Endothelial cell of umbilical vein (primary cell): ENCODE measurements at regions of chr6 and their contacts with region 1.

Region 1: DNA sequence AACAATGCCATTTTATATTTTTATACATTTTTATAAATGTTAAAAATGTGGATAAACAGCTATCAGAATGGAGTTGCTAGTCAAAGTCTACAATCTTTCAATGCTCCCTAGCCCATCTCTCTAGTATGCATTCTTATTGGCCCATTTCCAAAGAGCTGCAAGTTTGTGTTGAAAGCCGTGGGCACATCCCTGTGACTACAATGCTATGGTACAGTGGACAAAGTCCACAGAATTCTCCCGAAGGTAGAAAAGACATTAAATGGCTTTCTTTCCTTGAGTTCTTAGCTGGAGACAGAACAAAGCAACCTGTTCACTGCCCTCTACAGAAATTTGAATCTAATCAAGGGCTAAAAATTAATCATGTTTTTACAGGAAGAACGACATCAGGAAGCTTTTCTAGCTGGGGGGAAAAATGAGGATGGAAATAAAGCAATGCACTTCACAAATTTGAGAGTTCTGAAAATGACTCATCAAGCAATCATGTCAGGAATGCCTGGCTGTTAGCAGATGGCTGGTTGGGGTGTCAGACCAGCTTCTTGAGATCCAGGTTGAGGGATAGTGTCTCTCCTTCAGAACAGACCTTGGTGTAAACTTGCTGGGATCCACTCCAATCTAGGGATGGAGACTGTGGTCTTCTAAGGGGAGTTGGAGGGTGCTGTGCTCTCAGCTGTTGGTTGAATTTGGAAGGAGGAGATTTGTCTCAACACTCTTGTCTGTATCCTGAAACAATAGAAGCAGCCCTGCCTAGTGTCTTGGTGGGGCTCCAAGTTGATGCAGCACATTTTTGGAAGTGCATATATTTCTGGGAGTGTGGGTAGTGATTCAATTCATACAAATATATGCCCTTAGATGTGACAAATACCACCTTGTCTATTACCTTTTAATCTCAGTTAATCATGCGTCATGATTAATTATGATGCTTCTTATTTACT is 143.4 kb upstream of the PHACTR1 start:
- DNase-seq: peak; percentile 92
- H3K4me3 ChIP-seq: peak overlapping the region in 1 of 3 experiments; percentile 13
- H3K27ac ChIP-seq: peak overlapping the region; percentile 92
- H3K4me1 ChIP-seq: peaks cover 75% of the 10 kb centered on the region
- H3K27me3 ChIP-seq: no peaks in the 10 kb centered on the region
- CTCF ChIP-seq: no peak
- POLR2A ChIP-seq: no peak

Region 2: DNA sequence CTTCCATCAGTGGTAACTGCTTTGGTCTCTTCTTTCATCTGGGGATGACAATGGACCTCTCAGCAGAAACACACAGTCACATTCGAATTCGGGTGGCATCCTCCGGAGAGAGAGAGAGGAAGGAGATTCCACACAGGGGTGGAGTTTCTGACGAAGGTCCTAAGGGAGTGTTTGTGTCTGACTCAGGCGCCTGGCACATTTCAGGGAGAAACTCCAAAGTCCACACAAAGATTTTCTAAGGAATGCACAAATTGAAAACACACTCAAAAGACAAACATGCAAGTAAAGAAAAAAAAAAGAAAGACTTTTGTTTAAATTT is 276.9 kb before region 1 on chr6:
- CTCF ChIA-PET with region 1: interaction called, 5 read pairs
- POLR2A ChIA-PET with region 1: interaction called, 16 read pairs
- dilution Hi-C with region 1: no loop called
- intact Hi-C with region 1: loop called (anchors 1 kb)
- DNase-seq: peak; percentile 53
- H3K4me3 ChIP-seq: peak overlapping the region in 2 of 3 experiments; percentile 91 to 96
- H3K27ac ChIP-seq: peak overlapping the region; percentile 98
- H3K4me1 ChIP-seq: peaks cover 30% of the 10 kb centered on the region
- H3K27me3 ChIP-seq: no peaks in the 10 kb centered on the region
- CTCF ChIP-seq: no peak
- POLR2A ChIP-seq: no peak

Region 3: GRCh38 chr6:12490904-12491571 is 82.1 kb before region 1 on chr6:
- CTCF ChIA-PET with region 1: no interaction called
- POLR2A ChIA-PET with region 1: no interaction called
- dilution Hi-C with region 1: loop called (anchors 25 kb)
- intact Hi-C with region 1: loop called (anchors 1 kb)
- DNase-seq: peak; percentile 96
- H3K4me3 ChIP-seq: no peak overlapping the region
- H3K27ac ChIP-seq: peak overlapping the region; percentile 93
- H3K4me1 ChIP-seq: peaks cover 39% of the 10 kb centered on the region
- H3K27me3 ChIP-seq: no peaks in the 10 kb centered on the region
- CTCF ChIP-seq: no peak
- POLR2A ChIP-seq: no peak

Region 4: GRCh38 chr6:12545619-12546409 is 27.3 kb before region 1 on chr6:
- CTCF ChIA-PET with region 1: interaction called, 6 read pairs
- POLR2A ChIA-PET with region 1: no interaction called
- dilution Hi-C with region 1: no loop called
- intact Hi-C with region 1: loop called (anchors 2 kb)
- DNase-seq: peak; percentile 87
- H3K4me3 ChIP-seq: no peak overlapping the region
- H3K27ac ChIP-seq: peak overlapping the region; percentile 89
- H3K4me1 ChIP-seq: peaks cover 33% of the 10 kb centered on the region
- H3K27me3 ChIP-seq: no peaks in the 10 kb centered on the region
- CTCF ChIP-seq: no peak
- POLR2A ChIP-seq: no peak

Region 5: GRCh38 chr6:12557765-12558164 is 15.4 kb before region 1 on chr6:
- CTCF ChIA-PET with region 1: interaction called, 15 read pairs
- POLR2A ChIA-PET with region 1: no interaction called
- dilution Hi-C with region 1: no loop called
- intact Hi-C with region 1: no loop called
- DNase-seq: no peak
- H3K4me3 ChIP-seq: no peak overlapping the region
- H3K27ac ChIP-seq: no peak overlapping the region
- H3K4me1 ChIP-seq: no peaks in the 10 kb centered on the region
- H3K27me3 ChIP-seq: no peaks in the 10 kb centered on the region
- CTCF ChIP-seq: no peak
- POLR2A ChIP-seq: no peak